ENCODE measurements at regions of chr12 and their contacts with region 1.

Region 1: GRCh38 chr12:15186597-15186996 is 34.6 kb downstream of the RERG start:
- DNase-seq: no peak
- H3K4me3 ChIP-seq: no peak overlapping the region
- H3K27ac ChIP-seq: peak overlapping the region; percentile 19 to 63 (median 40)
- H3K4me1 ChIP-seq: peaks cover 0 to 26% (median 0%) of the 10 kb centered on the region in 4 donors
- H3K27me3 ChIP-seq: no peaks in the 10 kb centered on the region
- CTCF ChIP-seq: no peak
- EP300 ChIP-seq: no peak
- POLR2A ChIP-seq: no peak

Region 2: GRCh38 chr12:14567351-14568162 is 619.0 kb before region 1 on chr12 and contains the start of gene PLBD1:
- in situ Hi-C with region 1: no loop called
- intact Hi-C with region 1: loop called (anchors 5 kb)
- DNase-seq: peak; percentile 71
- H3K4me3 ChIP-seq: peak within 1 kb of the TSS; percentile 48 to 68 (median 65)
- H3K27ac ChIP-seq: peak within 1 kb of the TSS; percentile 72 to 92 (median 86)
- H3K4me1 ChIP-seq: peaks cover 0 to 37% (median 14%) of the 10 kb centered on the region in 4 donors
- H3K27me3 ChIP-seq: no peaks in the 10 kb centered on the region
- CTCF ChIP-seq: no peak
- EP300 ChIP-seq: no peak
- POLR2A ChIP-seq: peak; percentile 74
- total RNA-seq, gene PLBD1: 30.8 to 74.6 (median 40.4) TPM

Region 3: DNA sequence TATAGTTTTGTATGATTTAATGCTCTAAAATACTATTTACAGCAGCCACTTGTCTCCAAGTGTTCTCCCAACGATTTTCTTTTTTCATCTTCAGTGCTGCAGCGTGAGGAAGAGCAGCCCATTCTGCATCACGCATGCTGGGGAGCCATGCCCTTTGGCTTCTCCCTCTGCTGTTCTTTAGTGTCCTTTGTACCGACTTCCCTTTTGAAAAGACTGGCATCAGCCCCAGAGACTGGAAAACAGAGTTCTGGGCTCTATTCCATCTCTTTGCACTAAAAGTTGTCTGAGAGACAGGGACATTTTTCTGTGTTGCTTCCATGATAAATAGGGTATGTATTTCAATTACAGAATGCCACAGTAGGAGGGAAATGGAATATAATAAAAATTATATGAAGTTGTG is 70.5 kb before region 1 on chr12:
- in situ Hi-C with region 1: no loop called
- intact Hi-C with region 1: no loop called
- DNase-seq: no peak
- H3K4me3 ChIP-seq: no peak overlapping the region
- H3K27ac ChIP-seq: peak overlapping the region in 3 of 4 donors; percentile 5 to 44 (median 24)
- H3K4me1 ChIP-seq: peaks cover 0 to 3% (median 0%) of the 10 kb centered on the region in 4 donors
- H3K27me3 ChIP-seq: no peaks in the 10 kb centered on the region
- CTCF ChIP-seq: no peak
- EP300 ChIP-seq: no peak
- POLR2A ChIP-seq: no peak

Region 4: DNA sequence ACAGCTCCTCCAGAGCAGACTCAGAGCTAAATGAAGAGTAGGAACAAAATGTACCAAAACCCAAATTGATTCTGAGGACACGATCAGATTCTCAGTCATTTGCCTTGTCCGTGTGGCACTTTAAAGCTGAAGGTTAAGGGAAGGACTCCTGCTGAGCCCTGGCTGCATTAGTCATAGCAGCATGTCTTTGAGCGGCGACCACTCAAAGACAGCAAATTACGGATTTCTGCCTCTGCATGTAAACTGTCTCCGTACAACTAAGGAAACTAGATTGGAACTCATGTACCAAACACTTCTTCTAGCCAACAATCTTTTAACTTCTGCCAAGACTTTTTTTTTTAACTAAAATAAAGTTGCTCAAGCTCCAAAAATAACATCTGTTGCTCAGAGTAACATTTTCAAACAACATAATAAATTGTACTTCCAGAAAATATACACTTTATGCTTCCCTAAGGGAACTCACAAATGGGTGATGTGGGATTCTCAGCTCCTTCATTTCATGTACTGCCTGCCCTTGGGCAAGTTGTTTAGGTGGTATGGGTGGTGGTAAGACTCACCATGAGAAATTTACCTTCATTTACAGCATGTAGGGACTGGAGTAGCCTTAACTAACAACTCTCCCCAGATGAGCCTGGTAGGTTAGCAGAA is 21.5 kb before region 1 on chr12:
- in situ Hi-C with region 1: no loop called
- intact Hi-C with region 1: no loop called
- DNase-seq: no peak
- H3K4me3 ChIP-seq: no peak overlapping the region
- H3K27ac ChIP-seq: peak overlapping the region; percentile 64 to 82 (median 76)
- H3K4me1 ChIP-seq: peaks cover 0 to 38% (median 6%) of the 10 kb centered on the region in 4 donors
- H3K27me3 ChIP-seq: no peaks in the 10 kb centered on the region
- CTCF ChIP-seq: no peak
- EP300 ChIP-seq: no peak
- POLR2A ChIP-seq: no peak

Measured in transverse colon (tissue), 4 donors.